ENCODE measurements at regions of chr20 and their contacts with region 1.

Region 1: GRCh38 chr20:23350196-23350903 is at the start of gene NXT1:
- DNase-seq: peak; percentile 96 to 98
- H3K4me3 ChIP-seq: peak within 1 kb of the TSS; percentile 91
- H3K27ac ChIP-seq: peak within 1 kb of the TSS; percentile 98
- H3K4me1 ChIP-seq: peaks cover 25% of the 10 kb centered on the region
- H3K27me3 ChIP-seq: no peaks in the 10 kb centered on the region
- CTCF ChIP-seq: no peak
- total RNA-seq, gene NXT1: 29.8 and 30.9 TPM in 2 replicates

Region 2: GRCh38 chr20:21719592-21720214 is 1630.6 kb before region 1 on chr20:
- CTCF ChIA-PET with region 1: interaction called, 12 read pairs
- POLR2A ChIA-PET with region 1: no interaction called
- intact Hi-C with region 1: no loop called
- DNase-seq: peak; percentile 40 to 45
- H3K4me3 ChIP-seq: no peak overlapping the region
- H3K27ac ChIP-seq: no peak overlapping the region
- H3K4me1 ChIP-seq: no peaks in the 10 kb centered on the region
- H3K27me3 ChIP-seq: peaks cover 32% of the 10 kb centered on the region
- CTCF ChIP-seq: peak; percentile 90

Region 3: GRCh38 chr20:22437354-22437753 is 913.0 kb before region 1 on chr20:
- CTCF ChIA-PET with region 1: interaction called, 13 read pairs
- POLR2A ChIA-PET with region 1: no interaction called
- intact Hi-C with region 1: no loop called
- DNase-seq: no peak
- H3K4me3 ChIP-seq: no peak overlapping the region
- H3K27ac ChIP-seq: no peak overlapping the region
- H3K4me1 ChIP-seq: no peaks in the 10 kb centered on the region
- H3K27me3 ChIP-seq: no peaks in the 10 kb centered on the region
- CTCF ChIP-seq: no peak

Region 4: DNA sequence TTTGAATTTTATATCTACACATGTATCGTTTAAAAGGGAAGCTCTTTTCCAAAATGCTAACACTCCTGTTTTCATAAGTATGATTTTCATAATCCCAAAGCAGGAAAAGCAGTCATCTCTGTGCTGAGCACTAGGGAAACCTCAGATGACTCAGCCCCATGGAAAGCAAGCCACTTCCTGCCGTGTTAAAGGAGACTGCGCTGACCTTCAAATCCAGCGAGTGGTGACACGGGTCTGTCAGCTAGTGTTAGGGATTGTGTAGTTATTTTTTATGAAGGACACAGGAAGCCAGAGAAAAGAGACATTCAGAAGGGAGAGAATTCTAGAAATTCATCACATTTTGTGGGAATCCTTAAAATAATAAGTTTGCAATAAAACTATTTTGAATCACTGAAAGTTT is 207.3 kb before region 1 on chr20:
- CTCF ChIA-PET with region 1: interaction called, 15 read pairs
- POLR2A ChIA-PET with region 1: no interaction called
- intact Hi-C with region 1: loop called (anchors 10 kb)
- DNase-seq: peak; percentile 37 to 82
- H3K4me3 ChIP-seq: no peak overlapping the region
- H3K27ac ChIP-seq: peak overlapping the region; percentile 93
- H3K4me1 ChIP-seq: peaks cover 76% of the 10 kb centered on the region
- H3K27me3 ChIP-seq: no peaks in the 10 kb centered on the region
- CTCF ChIP-seq: no peak

Region 5: GRCh38 chr20:23484081-23484480 is 133.7 kb after region 1 on chr20:
- CTCF ChIA-PET with region 1: no interaction called
- POLR2A ChIA-PET with region 1: no interaction called
- intact Hi-C with region 1: no loop called
- DNase-seq: no peak
- H3K4me3 ChIP-seq: no peak overlapping the region
- H3K27ac ChIP-seq: no peak overlapping the region
- H3K4me1 ChIP-seq: no peaks in the 10 kb centered on the region
- H3K27me3 ChIP-seq: 0 out of 2 replicates have a peak, but pooled peaks cover 2% of the 10 kb centered on the region
- CTCF ChIP-seq: no peak

Region 6: DNA sequence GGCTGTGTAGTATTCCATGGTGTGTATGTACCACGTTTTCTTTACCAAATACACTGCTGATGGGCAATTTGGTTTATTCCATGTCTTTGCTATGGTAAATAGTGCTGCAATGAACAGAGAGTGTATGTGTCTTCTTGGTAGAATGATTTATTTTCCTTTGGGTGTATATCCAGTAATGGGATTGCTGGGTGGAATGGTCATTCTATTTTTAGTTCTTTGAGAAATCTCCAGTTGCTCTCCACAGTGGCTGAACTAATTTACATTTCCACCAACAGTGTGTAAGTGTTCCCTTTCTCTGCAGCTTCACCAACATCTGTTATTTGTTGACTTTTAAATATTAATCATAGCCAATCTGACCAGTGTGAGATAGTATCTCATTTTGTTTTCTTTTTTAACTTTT is 204.1 kb after region 1 on chr20:
- CTCF ChIA-PET with region 1: interaction called, 13 read pairs
- POLR2A ChIA-PET with region 1: no interaction called
- intact Hi-C with region 1: no loop called
- DNase-seq: no peak
- H3K4me3 ChIP-seq: no peak overlapping the region
- H3K27ac ChIP-seq: no peak overlapping the region
- H3K4me1 ChIP-seq: no peaks in the 10 kb centered on the region
- H3K27me3 ChIP-seq: peaks cover 42% of the 10 kb centered on the region
- CTCF ChIP-seq: no peak

Region 7: DNA sequence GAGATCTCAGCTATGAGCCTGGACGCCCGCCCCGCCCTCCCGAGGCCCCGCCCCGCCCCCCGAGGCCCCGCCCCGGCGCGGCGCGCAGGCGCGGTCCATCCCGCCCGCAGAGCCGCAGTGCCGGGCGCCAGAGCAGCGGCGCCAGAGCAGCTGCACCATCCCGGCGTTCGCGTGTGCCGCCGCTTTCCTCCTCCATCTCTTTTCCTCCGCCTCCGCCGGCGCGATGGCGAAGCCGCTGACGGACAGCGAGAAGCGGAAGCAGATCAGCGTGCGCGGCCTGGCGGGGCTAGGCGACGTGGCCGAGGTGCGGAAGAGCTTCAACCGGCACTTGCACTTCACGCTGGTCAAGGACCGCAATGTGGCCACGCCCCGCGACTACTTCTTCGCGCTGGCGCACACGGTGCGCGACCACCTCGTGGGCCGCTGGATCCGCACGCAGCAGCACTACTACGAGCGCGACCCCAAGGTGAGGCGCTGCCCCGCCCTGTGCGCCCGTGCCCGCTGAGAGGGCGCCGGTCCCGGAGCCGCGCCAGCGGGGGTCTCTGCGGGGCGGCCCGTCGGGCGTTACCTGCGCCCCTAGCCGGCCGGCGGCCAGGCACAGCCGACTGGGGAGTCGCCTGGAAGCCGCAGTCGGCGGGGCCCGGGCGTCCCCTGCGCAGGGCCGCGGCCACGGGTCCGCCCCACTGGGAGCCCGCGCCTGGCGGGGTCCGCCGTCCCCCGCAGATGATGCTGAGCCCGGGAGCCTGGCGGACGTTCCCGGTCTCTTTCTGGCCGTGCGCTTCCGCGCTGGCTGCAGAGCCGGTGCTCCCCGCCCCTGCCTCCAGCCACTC is 1897.8 kb after region 1 on chr20 and contains the start of gene PYGB:
- CTCF ChIA-PET with region 1: no interaction called
- POLR2A ChIA-PET with region 1: interaction called, 14 read pairs
- intact Hi-C with region 1: no loop called
- DNase-seq: peak; percentile 65 to 77
- H3K4me3 ChIP-seq: peak within 1 kb of the TSS; percentile 96
- H3K27ac ChIP-seq: peak within 1 kb of the TSS; percentile 83
- H3K4me1 ChIP-seq: peaks cover 58% of the 10 kb centered on the region
- H3K27me3 ChIP-seq: no peaks in the 10 kb centered on the region
- CTCF ChIP-seq: no peak
- total RNA-seq, gene PYGB: 127 and 133 TPM in 2 replicates

Measured in PC-9 (cell line).